CD4-positive, alpha-beta T cell (primary cell): ENCODE measurements at regions of chr4 and their contacts with region 1.

Region 1: DNA sequence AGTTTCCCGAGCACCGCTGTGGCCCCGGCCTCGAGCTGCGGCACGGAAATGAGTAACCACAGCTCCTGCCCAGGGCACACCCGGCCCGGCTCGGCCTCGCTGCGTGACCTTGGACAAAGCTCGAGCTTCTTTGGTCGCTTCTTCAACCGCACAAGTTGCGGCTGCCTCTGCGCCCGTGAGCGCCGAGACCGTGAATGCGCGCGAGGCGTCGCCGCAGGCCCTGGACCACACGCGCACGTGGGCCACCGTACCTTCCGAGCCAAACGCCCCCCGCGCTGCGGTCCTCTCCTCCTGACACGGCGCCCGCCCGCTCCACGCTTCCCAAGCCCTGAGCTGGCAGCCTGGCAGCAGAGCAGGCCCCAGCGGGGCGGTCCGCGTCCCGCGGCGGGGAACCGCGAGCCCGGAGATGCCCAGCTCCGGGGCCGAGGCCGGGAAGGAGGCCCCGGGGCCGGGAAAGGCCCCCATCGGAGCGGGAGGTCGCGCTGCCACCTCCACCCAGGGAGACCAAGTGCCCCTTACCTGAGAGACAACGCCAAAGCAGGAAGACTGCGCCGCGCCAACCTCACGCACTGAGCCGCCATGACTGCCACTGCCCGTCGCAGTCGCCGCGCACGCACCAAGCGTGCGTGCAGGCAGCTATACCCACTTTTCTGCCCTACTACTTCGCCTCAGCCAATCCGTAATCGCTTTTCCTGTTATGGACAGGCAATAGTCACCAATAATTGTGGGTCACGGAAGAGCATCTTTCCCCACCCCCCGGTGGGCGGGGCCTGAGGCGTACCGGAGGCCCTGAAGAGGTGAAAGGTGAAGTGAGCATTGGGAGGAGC is at the start of gene GRPEL1:
- DNase-seq: peak; percentile 100
- ATAC-seq: peak; percentile 88
- H3K4me3 ChIP-seq: peak within 1 kb of the TSS; percentile 76
- H3K4me3 Mint-ChIP-seq: peak within 1 kb of the TSS; percentile 97
- H3K27ac ChIP-seq: peak within 1 kb of the TSS; percentile 71 to 78
- H3K27ac Mint-ChIP-seq: peak within 1 kb of the TSS; percentile 93
- H3K4me1 ChIP-seq: peaks cover 45% of the 10 kb centered on the region
- H3K4me1 Mint-ChIP-seq: peaks cover 60% of the 10 kb centered on the region
- H3K27me3 ChIP-seq: no peaks in the 10 kb centered on the region
- H3K27me3 Mint-ChIP-seq: no peaks in the 10 kb centered on the region
- CTCF ChIP-seq: no peak
- total RNA-seq, gene GRPEL1: 55.6 to 58.6 TPM

Region 2: DNA sequence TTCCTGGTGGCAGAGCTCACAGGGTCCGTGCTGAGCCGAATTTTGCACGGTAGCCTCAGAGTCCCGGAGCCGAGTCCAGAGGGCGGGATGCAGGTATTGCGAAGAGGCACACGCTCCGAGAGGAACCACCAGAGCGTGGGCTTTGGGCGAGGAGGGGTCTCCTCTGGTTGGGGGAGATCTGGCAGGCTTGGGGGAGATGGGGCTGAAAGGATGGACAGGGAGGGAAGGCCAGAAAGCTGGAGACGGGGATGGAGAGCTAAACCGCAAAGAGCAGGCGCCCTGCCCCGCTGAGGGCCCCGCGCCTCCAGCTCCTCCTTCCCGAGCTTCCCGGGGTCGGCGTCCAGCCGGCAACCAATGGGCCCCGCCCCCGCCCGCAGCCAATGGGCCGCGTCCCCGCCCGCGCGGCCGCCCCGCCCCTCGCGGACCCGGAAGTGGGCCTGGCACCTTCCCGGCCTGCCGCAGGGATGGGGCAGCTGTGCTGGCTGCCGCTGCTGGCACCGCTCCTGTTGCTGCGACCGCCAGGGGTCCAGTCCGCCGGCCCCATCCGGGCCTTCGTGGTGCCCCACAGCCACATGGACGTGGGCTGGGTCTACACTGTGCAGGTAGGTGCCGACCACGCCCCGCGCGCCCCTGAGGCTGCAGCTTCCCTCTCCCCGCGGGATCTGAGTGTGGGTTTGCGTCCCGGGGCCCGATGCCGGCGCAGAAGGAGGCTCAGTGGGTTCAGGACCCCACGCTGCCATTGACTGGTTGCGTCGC is 492.7 kb before region 1 on chr4 and contains the start of gene MAN2B2:
- CTCF ChIA-PET with region 1: no interaction called
- POLR2A ChIA-PET with region 1: interaction called, 5 read pairs
- intact Hi-C with region 1: loop called in 1 of 2 experiments (anchors 10 kb)
- DNase-seq: peak; percentile 51 to 89 (median 80)
- ATAC-seq: peak; percentile 93
- H3K4me3 ChIP-seq: peak within 1 kb of the TSS; percentile 98
- H3K4me3 Mint-ChIP-seq: peak within 1 kb of the TSS; percentile 93
- H3K27ac ChIP-seq: peak within 1 kb of the TSS; percentile 55 to 74
- H3K27ac Mint-ChIP-seq: peak within 1 kb of the TSS; percentile 79
- H3K4me1 ChIP-seq: peaks cover 30% of the 10 kb centered on the region
- H3K4me1 Mint-ChIP-seq: peaks cover 4% of the 10 kb centered on the region
- H3K27me3 ChIP-seq: no peaks in the 10 kb centered on the region
- H3K27me3 Mint-ChIP-seq: no peaks in the 10 kb centered on the region
- CTCF ChIP-seq: no peak
- total RNA-seq, gene MAN2B2: 25.9 to 28.5 TPM

Region 3: DNA sequence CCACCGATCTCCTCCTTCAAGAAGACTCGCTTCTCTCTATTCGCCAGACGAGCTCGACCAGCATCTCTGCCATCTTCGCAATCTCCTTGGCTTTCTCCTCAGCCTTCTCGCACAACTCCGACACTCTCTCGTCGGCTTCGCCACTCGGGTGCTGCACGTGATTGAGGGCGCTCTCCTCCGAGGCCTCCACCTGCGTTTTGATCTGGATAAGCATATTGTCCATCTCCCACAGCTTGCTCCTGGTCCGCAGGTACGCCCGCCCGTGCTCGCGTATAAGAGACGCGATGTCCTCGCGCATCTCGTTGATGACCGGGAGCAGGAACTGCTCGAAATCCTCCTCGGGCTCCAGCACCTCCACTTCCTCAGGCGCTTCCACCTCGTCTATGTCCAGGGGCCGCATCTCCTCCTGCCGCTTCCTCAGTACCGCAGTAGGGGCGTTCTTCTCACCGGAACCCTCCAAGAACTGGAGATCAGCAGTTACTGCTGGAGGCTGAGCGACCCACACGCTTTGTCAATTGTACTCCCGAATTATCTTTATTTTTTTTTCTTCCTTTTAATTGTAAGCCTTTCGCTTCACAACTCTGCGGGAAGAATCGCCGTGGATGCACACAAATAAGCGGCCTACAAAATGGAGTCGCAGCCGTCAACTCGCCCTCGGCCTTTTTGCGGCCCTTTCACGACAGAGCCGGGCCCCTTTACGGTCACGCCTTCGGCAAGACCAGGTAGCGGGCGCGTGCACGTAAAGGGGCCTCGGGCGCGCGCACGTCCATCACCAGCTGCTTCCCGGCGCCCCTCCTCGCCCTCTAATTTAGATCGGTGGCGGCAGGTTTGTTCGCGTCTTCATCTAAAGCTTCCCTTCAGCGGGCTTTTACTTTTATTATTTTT is 358.2 kb before region 1 on chr4 and contains the start of gene MRFAP1L1:
- CTCF ChIA-PET with region 1: no interaction called
- POLR2A ChIA-PET with region 1: interaction called, 44 read pairs
- intact Hi-C with region 1: no loop called
- DNase-seq: peak; percentile 94 to 98 (median 96)
- ATAC-seq: peak; percentile 87
- H3K4me3 ChIP-seq: peak within 1 kb of the TSS; percentile 74
- H3K4me3 Mint-ChIP-seq: peak within 1 kb of the TSS; percentile 99
- H3K27ac ChIP-seq: peak within 1 kb of the TSS; percentile 79 to 85
- H3K27ac Mint-ChIP-seq: peak within 1 kb of the TSS; percentile 97
- H3K4me1 ChIP-seq: peaks cover 40% of the 10 kb centered on the region
- H3K4me1 Mint-ChIP-seq: peaks cover 69% of the 10 kb centered on the region
- H3K27me3 ChIP-seq: no peaks in the 10 kb centered on the region
- H3K27me3 Mint-ChIP-seq: no peaks in the 10 kb centered on the region
- CTCF ChIP-seq: no peak
- total RNA-seq, gene MRFAP1L1: 26.6 to 27.0 TPM

Region 4: GRCh38 chr4:6783053-6783981 is 284.3 kb before region 1 on chr4:
- CTCF ChIA-PET with region 1: no interaction called
- POLR2A ChIA-PET with region 1: interaction called, 19 read pairs
- intact Hi-C with region 1: loop called (anchors 2 kb)
- DNase-seq: peak; percentile 78 to 94 (median 86)
- ATAC-seq: peak; percentile 78
- H3K4me3 ChIP-seq: peak overlapping the region; percentile 77
- H3K4me3 Mint-ChIP-seq: peak overlapping the region; percentile 92
- H3K27ac ChIP-seq: peak overlapping the region; percentile 92 to 96
- H3K27ac Mint-ChIP-seq: peak overlapping the region; percentile 86
- H3K4me1 ChIP-seq: peaks cover 43% of the 10 kb centered on the region
- H3K4me1 Mint-ChIP-seq: peaks cover 59% of the 10 kb centered on the region
- H3K27me3 ChIP-seq: no peaks in the 10 kb centered on the region
- H3K27me3 Mint-ChIP-seq: no peaks in the 10 kb centered on the region
- CTCF ChIP-seq: no peak

Region 5: GRCh38 chr4:6942238-6942800 is 125.3 kb before region 1 on chr4:
- CTCF ChIA-PET with region 1: interaction called, 3 read pairs
- POLR2A ChIA-PET with region 1: interaction called, 11 read pairs
- intact Hi-C with region 1: no loop called
- DNase-seq: peak in 13 of 14 experiments; percentile 17 to 79 (median 36)
- ATAC-seq: peak; percentile 86
- H3K4me3 ChIP-seq: peak overlapping the region; percentile 40
- H3K4me3 Mint-ChIP-seq: peak overlapping the region; percentile 83
- H3K27ac ChIP-seq: peak overlapping the region; percentile 62 to 81
- H3K27ac Mint-ChIP-seq: peak overlapping the region; percentile 95
- H3K4me1 ChIP-seq: peaks cover 86% of the 10 kb centered on the region
- H3K4me1 Mint-ChIP-seq: peaks cover 73% of the 10 kb centered on the region
- H3K27me3 ChIP-seq: no peaks in the 10 kb centered on the region
- H3K27me3 Mint-ChIP-seq: no peaks in the 10 kb centered on the region
- CTCF ChIP-seq: no peak

Region 6: DNA sequence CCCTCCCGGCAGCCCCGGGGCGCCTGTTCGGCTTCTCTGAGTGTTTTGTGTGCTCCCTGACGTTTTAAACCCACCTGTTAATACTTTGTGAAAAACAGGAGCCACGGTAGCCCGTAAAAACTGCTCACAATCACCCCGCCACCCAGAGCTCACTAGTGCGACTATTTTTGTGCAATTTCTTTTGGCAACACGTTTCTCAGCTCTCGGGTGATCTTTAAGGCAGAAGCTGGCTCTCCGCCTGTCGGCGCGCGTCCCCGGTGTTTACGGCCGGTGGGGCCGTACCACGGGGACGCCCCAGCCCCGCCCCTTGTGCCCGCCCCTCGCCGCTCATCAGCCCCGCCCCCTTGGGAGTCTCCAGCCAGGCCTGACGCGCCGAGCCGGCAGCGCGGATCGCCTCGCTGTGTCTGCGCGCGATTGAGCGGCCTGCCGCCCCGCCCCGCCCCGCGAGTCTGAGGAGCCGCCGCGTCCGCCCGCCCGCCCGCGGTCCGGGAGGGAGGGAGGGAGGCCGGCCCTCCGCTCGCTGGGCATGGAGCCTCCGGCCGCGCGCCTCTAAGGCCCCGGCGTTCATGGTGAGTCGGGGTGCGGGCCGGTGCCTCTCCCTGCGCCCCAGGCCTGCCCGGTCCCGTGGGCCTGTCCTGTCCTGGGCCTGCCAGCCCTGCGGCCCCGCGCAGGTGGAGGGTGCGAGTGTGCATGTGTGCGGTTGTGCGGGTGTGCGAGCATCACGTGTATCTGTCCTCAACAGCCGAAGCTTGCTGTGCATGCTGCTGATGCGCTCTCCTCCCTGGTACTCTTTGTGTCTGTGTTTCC is 80.7 kb before region 1 on chr4:
- CTCF ChIA-PET with region 1: interaction called, 4 read pairs
- POLR2A ChIA-PET with region 1: interaction called, 42 read pairs
- intact Hi-C with region 1: loop called (anchors 1 kb)
- DNase-seq: peak; percentile 88 to 98 (median 92)
- ATAC-seq: peak; percentile 90
- H3K4me3 ChIP-seq: peak overlapping the region; percentile 88
- H3K4me3 Mint-ChIP-seq: peak overlapping the region; percentile 97
- H3K27ac ChIP-seq: peak overlapping the region; percentile 78 to 93
- H3K27ac Mint-ChIP-seq: peak overlapping the region; percentile 95
- H3K4me1 ChIP-seq: peaks cover 64% of the 10 kb centered on the region
- H3K4me1 Mint-ChIP-seq: peaks cover 67% of the 10 kb centered on the region
- H3K27me3 ChIP-seq: no peaks in the 10 kb centered on the region
- H3K27me3 Mint-ChIP-seq: no peaks in the 10 kb centered on the region
- CTCF ChIP-seq: no peak

Region 7: DNA sequence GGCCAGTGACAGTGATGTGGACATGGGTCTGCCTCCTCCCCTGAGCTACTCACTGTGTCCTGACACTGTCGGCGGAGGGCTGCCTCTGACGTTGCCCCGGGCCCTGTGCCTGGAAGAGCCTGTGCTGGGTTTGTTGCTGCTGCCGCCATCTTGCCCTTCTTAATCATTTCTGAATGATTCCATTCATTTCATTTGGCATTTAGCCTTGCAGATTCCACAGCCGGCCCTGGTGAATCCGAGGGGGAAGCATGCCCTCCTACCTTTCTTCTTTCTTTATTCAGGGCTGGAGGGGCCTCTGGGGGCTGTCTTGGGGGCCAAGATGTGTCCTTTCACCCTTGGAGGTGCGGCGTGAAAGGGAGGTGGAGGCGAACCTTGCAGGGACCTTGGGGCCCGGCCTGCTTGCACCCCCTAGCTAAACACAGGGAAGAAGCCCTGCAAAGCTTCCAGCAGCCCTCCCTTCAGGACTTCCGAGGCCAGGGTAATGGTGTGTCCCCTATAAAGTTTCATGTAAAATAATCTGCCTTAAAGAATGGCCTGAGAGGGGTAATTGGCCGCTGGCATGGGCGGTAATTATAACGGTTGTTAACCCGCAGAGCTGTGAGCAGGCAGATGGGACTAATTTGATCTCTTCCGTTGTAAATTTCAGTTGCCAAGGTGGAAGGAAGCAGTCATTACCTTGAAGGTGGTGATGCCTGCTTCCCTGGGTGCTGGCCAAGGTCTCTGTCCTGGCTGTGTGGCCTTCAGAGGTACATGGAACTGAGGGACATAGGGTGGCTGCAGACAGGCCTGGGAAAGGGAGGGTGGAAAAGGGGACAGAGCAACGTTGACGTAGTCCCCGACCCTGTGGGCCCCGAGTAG is 274.8 kb after region 1 on chr4:
- CTCF ChIA-PET with region 1: no interaction called
- POLR2A ChIA-PET with region 1: no interaction called
- intact Hi-C with region 1: no loop called
- DNase-seq: no peak
- ATAC-seq: no peak
- H3K4me3 ChIP-seq: no peak overlapping the region
- H3K4me3 Mint-ChIP-seq: no peak overlapping the region
- H3K27ac ChIP-seq: no peak overlapping the region
- H3K27ac Mint-ChIP-seq: no peak overlapping the region
- H3K4me1 ChIP-seq: no peaks in the 10 kb centered on the region
- H3K4me1 Mint-ChIP-seq: no peaks in the 10 kb centered on the region
- H3K27me3 ChIP-seq: no peaks in the 10 kb centered on the region
- H3K27me3 Mint-ChIP-seq: peaks cover 3% of the 10 kb centered on the region
- CTCF ChIP-seq: no peak

Region 8: DNA sequence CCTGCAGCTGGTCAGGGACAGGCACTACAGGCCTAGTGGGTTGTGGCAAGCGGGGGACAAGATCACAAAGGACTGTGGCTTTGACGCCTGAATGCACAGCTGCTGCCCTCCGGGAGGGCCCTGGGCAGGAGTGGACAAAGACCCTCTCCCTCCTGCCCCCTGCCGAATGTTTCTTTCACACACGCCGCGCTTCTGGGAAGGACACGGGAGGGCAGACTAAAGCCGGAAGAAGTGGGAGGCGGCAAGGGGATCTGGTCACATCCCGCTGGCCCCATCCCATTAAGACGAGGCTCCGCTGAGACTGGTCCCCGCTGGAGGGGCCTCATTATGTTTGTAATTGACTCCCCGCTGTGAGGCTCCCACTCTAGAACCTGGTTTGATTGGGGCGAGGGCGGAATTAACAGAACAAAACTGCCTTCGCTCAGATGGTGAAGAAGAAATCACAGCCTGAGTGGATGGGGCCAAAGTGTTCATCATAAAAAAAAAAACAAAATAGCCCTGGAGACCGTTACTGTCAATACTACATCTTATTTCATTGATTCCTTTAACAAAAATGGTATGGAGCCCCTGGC is 404.9 kb after region 1 on chr4:
- CTCF ChIA-PET with region 1: no interaction called
- POLR2A ChIA-PET with region 1: no interaction called
- intact Hi-C with region 1: no loop called
- DNase-seq: no peak
- ATAC-seq: no peak
- H3K4me3 ChIP-seq: no peak overlapping the region
- H3K4me3 Mint-ChIP-seq: no peak overlapping the region
- H3K27ac ChIP-seq: no peak overlapping the region
- H3K27ac Mint-ChIP-seq: no peak overlapping the region
- H3K4me1 ChIP-seq: no peaks in the 10 kb centered on the region
- H3K4me1 Mint-ChIP-seq: no peaks in the 10 kb centered on the region
- H3K27me3 ChIP-seq: peaks cover 0 to 4% of the 10 kb centered on the region in 2 experiments
- H3K27me3 Mint-ChIP-seq: peaks cover 13% of the 10 kb centered on the region
- CTCF ChIP-seq: no peak